Endothelial cell of umbilical vein (primary cell): ENCODE measurements at regions of chr13 and their contacts with region 1.

Region 1: GRCh38 chr13:30617315-30618185 is at the start of gene USPL1:
- DNase-seq: peak; percentile 100
- H3K4me3 ChIP-seq: peak within 1 kb of the TSS; percentile 83 to 95 (median 95)
- H3K27ac ChIP-seq: peak within 1 kb of the TSS; percentile 87
- H3K4me1 ChIP-seq: peaks cover 36% of the 10 kb centered on the region
- H3K27me3 ChIP-seq: no peaks in the 10 kb centered on the region
- CTCF ChIP-seq: peak in 1 of 2 donors; percentile 31
- POLR2A ChIP-seq: no peak
- total RNA-seq, gene USPL1: 18.8 and 21.0 TPM in 2 replicates

Region 2: DNA sequence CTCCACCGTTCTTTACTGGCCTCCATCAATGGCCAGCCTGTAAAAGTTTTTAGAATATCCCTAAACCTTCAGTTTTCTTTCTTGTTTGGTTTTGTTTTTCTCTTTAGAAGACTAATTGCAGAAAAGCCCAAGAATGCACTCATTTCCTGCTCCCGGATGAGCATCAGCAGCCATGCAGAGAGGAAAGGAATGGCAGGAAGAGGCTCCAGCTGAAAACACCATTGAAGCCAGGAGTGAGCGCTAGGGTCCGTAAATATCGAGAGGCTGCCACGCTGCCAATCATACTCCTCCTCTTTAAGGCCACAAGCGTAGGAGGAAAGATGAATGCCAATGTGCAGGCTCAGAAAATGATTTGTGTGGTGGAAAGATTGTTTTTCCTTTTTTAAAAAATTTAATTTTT is 252.7 kb before region 1 on chr13:
- CTCF ChIA-PET with region 1: no interaction called
- POLR2A ChIA-PET with region 1: no interaction called
- dilution Hi-C with region 1: no loop called
- intact Hi-C with region 1: loop called (anchors 2 kb)
- DNase-seq: peak; percentile 95
- H3K4me3 ChIP-seq: peak overlapping the region in 1 of 3 experiments; percentile 29
- H3K27ac ChIP-seq: peak overlapping the region; percentile 95
- H3K4me1 ChIP-seq: peaks cover 30% of the 10 kb centered on the region
- H3K27me3 ChIP-seq: no peaks in the 10 kb centered on the region
- CTCF ChIP-seq: no peak
- POLR2A ChIP-seq: peak; percentile 61

Region 3: GRCh38 chr13:30572859-30573275 is 44.7 kb before region 1 on chr13:
- CTCF ChIA-PET with region 1: no interaction called
- POLR2A ChIA-PET with region 1: interaction called, 4 read pairs
- dilution Hi-C with region 1: no loop called
- intact Hi-C with region 1: loop called (anchors 5 kb)
- DNase-seq: peak; percentile 77
- H3K4me3 ChIP-seq: peak overlapping the region; percentile 0 to 88 (median 73)
- H3K27ac ChIP-seq: peak overlapping the region; percentile 44
- H3K4me1 ChIP-seq: peaks cover 9% of the 10 kb centered on the region
- H3K27me3 ChIP-seq: no peaks in the 10 kb centered on the region
- CTCF ChIP-seq: peak in 1 of 2 donors; percentile 12
- POLR2A ChIP-seq: no peak

Region 4: DNA sequence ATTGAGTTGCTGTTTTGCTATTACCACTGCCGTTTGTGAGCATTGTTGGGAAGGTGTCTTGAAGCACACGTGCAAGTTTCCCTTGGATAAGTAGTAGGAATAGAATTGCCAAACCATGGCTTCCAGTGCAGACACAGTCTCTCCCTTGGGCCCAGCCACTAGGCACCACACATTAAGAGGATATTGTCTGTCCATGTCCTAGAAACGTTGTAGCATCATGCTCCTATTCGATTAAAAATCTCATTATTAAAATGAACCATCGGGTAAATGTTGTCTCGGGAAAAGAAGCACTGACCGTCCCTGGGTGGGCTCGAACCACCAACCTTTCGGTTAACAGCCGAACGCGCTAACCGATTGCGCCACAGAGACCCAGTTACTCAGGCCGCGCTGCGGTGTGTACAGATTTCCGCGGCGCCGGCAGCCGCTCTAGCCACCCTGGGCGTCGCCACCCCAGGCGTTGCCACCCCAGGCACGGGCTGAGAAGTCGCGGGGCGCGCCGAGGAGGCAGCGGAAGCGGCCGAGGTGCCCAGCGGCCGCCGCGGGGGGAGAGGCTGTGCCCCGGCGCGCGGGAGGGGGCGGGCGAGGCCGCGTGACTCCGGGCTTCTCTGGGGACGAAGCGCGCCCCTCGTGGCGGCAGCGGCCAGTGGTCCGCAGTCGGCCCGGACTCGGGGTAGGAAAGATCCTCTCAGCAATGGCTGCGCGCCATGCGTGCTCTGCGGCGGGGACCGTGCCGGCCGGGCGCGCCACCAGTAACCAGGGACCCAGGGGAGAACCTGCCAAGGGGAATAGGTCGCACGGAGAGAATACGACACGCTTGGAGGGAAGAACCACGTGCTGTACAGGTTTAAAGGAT is 56.3 kb after region 1 on chr13:
- CTCF ChIA-PET with region 1: no interaction called
- POLR2A ChIA-PET with region 1: no interaction called
- dilution Hi-C with region 1: no loop called
- intact Hi-C with region 1: loop called (anchors 1 kb)
- DNase-seq: peak; percentile 88
- H3K4me3 ChIP-seq: peak overlapping the region; percentile 39 to 48 (median 43)
- H3K27ac ChIP-seq: peak overlapping the region; percentile 66
- H3K4me1 ChIP-seq: peaks cover 8% of the 10 kb centered on the region
- H3K27me3 ChIP-seq: no peaks in the 10 kb centered on the region
- CTCF ChIP-seq: peak; percentile 82 to 83
- POLR2A ChIP-seq: no peak

Region 5: GRCh38 chr13:30739761-30740642 is 122.5 kb after region 1 on chr13:
- CTCF ChIA-PET with region 1: no interaction called
- POLR2A ChIA-PET with region 1: no interaction called
- dilution Hi-C with region 1: no loop called
- intact Hi-C with region 1: loop called (anchors 1 kb)
- DNase-seq: peak; percentile 64
- H3K4me3 ChIP-seq: no peak overlapping the region
- H3K27ac ChIP-seq: peak overlapping the region; percentile 66
- H3K4me1 ChIP-seq: peaks cover 50% of the 10 kb centered on the region
- H3K27me3 ChIP-seq: no peaks in the 10 kb centered on the region
- CTCF ChIP-seq: no peak
- POLR2A ChIP-seq: no peak

Region 6: DNA sequence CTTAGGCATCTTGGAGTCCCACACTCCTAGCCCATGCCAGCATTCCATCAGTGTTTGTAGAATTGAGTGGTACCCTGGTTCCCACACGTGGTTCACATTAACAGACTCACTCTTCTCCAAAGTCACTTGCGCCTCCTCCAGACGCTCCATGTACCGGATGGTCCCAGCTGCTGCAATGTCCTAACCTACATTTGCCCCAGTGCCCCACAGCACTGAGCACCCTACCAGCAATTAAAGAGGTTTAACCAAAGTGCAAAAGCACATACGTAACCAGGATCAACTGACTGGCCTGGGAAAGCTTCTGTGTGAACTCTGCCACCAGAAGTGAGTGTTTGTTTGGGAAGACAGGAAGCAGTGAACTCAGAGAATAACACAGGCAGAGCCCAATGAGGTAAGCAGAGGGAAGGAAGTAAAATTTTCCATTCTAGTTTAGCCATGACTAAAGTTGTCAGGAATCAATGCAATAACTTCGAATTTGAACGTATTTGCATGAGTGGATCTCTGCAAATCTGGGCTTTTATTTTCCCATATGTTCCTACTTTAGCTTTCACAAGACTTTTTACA is 281.2 kb after region 1 on chr13:
- CTCF ChIA-PET with region 1: no interaction called
- POLR2A ChIA-PET with region 1: no interaction called
- dilution Hi-C with region 1: no loop called
- intact Hi-C with region 1: loop called (anchors 2 kb)
- DNase-seq: peak; percentile 99
- H3K4me3 ChIP-seq: peak overlapping the region in 1 of 3 experiments; percentile 20
- H3K27ac ChIP-seq: peak overlapping the region; percentile 90
- H3K4me1 ChIP-seq: peaks cover 40% of the 10 kb centered on the region
- H3K27me3 ChIP-seq: no peaks in the 10 kb centered on the region
- CTCF ChIP-seq: no peak
- POLR2A ChIP-seq: no peak

Region 7: DNA sequence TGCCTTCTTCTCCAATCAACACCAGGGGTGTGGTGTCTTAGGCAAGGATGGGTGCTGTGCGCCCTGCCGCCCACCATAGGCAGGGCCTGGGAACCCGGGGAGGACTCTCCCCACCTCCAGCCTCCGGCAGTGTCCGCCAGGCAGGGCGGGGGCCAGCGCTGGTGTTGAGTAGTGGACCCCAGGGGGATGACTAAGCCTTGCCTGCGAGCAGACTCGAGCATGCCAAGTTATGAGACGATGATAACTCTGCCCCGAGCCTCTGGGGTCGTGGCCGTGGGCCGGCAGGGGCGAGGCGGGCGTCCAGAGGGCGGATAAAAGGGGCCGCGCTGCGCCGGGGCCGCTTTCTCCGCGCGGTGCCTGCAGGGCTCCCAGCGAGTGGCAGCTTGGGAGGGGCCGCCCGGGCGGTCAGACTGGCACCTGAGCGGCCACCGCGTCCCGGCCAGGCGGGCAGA is 288.4 kb after region 1 on chr13 and contains the start of gene MEDAG:
- CTCF ChIA-PET with region 1: no interaction called
- POLR2A ChIA-PET with region 1: no interaction called
- dilution Hi-C with region 1: no loop called
- intact Hi-C with region 1: loop called (anchors 2 kb)
- DNase-seq: peak; percentile 85
- H3K4me3 ChIP-seq: peak within 1 kb of the TSS; percentile 7 to 43 (median 38)
- H3K27ac ChIP-seq: peak within 1 kb of the TSS; percentile 79
- H3K4me1 ChIP-seq: peaks cover 32% of the 10 kb centered on the region
- H3K27me3 ChIP-seq: no peaks in the 10 kb centered on the region
- CTCF ChIP-seq: no peak
- POLR2A ChIP-seq: peak; percentile 67
- total RNA-seq, gene MEDAG: 27.2 and 30.2 TPM in 2 replicates